ENCODE measurements at regions of chr18 and their contacts with region 1.

Region 1: GRCh38 chr18:46173393-46174341 is 69.5 kb downstream of the HAUS1 start:
- DNase-seq: peak; percentile 63
- H3K4me3 ChIP-seq: peak overlapping the region; percentile 93
- CTCF ChIP-seq: peak; percentile 97

Region 2: GRCh38 chr18:45920367-45920766 is 253.3 kb before region 1 on chr18:
- CTCF ChIA-PET with region 1: no interaction called
- POLR2A ChIA-PET with region 1: no interaction called
- DNase-seq: peak; percentile 14
- H3K4me3 ChIP-seq: no peak overlapping the region
- CTCF ChIP-seq: no peak

Region 3: DNA sequence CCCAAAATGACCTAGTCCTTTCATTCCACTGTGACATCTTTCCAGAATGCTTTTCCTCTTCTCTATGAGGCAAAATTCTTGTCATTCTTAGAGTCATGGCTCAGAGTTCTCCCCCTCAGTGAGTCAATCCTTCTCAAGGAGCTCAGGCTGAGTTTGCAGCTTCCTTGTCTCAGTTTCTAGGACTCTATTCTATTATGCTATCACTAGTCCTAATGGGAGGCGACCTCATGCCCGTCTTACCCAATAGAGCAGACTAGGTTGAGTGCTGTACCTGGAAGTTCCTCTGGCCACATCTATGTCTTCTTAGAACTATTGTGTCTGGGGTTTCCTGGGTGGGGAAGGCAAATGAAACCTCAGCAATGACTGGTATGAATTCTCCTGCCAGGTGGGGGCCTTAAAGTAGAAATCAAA is 18.0 kb before region 1 on chr18:
- CTCF ChIA-PET with region 1: interaction called, 180 read pairs
- POLR2A ChIA-PET with region 1: interaction called, 10 read pairs
- DNase-seq: peak; percentile 76
- H3K4me3 ChIP-seq: no peak overlapping the region
- CTCF ChIP-seq: no peak

Region 4: GRCh38 chr18:46220116-46220515 is 46.4 kb after region 1 on chr18:
- CTCF ChIA-PET with region 1: interaction called, 53 read pairs
- POLR2A ChIA-PET with region 1: interaction called, 5 read pairs
- DNase-seq: peak; percentile 55
- H3K4me3 ChIP-seq: no peak overlapping the region
- CTCF ChIP-seq: no peak

Region 5: DNA sequence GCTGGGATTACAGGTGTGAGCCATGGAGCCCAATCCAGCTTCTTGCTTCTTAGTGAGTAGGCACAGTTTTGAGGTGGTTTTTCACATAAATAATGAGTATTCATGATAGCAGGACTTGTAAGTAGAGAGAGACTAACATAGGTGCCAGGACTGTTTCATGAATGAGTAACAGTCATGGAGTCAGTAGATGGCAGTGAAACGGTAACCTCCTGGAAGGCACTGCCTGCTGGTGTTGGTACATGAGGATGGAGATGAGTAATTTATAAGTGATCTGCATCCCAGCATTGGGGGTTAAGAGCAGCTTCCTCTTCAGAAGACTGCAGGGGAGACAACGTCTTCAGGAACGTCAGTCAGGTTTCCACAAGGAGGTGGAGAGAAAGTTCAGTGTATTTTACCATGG is 74.3 kb after region 1 on chr18:
- CTCF ChIA-PET with region 1: interaction called, 16 read pairs
- POLR2A ChIA-PET with region 1: interaction called, 4 read pairs
- DNase-seq: no peak
- H3K4me3 ChIP-seq: no peak overlapping the region
- CTCF ChIP-seq: no peak

Region 6: GRCh38 chr18:46281185-46282176 is 107.8 kb after region 1 on chr18:
- CTCF ChIA-PET with region 1: interaction called, 125 read pairs
- POLR2A ChIA-PET with region 1: interaction called, 5 read pairs
- DNase-seq: no peak
- H3K4me3 ChIP-seq: no peak overlapping the region
- CTCF ChIP-seq: peak; percentile 97

Region 7: DNA sequence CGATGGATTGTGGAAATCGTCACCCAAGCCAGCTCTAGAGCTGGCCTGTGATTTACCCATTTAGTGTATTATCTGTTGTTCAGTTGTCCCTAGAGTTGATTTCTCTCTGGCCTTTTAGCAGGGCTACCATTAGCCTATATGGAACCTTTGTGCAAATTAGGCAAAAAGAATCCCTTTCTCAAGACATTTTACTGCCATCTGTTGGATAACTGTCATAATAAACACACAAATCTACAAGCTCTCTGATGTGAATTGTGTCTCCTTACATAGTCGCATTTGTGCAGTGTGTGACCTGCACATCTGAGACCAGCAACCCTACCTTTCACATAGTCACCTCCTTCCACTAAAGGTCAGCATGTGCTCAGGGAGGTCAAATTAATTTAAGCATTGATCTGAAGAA is 449.3 kb after region 1 on chr18:
- CTCF ChIA-PET with region 1: interaction called, 25 read pairs
- POLR2A ChIA-PET with region 1: interaction called, 3 read pairs
- DNase-seq: no peak
- H3K4me3 ChIP-seq: no peak overlapping the region
- CTCF ChIP-seq: no peak